Adrenal gland (tissue), 19 donors: ENCODE measurements at regions of chr3 and their contacts with region 1.

Region 1: DNA sequence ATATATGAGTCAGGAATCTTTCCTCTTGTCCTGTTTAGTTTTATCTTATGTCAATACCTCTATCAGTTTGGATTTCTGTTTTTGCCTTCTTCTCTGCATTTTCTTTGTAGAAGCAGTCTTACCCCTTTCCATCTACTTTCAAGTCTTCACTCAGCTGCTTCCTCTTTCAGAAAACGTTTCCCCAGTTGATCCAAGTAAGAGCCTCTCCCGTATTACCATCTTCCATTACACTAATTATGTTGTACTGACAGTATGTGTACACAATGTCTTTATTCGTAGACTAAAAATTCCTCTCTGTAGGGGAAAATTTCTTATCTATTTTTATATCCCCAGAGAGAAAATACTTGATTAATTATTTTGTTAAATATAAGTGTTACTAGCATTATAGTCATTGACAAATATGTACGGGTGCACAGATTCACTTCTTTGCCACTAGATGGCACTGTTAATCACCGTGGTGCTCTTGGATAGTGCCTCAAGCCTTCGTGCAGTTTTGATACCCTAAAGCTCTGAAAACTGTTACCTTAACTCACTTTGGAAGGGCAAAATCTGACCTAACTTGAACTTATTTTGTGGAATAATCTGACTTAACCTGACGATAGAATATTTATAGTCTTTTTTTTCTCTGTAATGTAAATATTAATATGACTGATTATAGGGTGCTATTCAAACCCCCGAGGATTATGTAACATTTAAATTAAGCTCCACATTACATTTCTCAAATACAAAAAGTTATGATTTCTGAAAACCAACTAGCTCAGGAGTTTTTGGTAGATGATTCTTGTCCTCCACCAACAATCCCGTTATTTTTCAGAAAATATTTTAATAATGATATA is 74.2 kb upstream of the POU1F1 start:
- DNase-seq: peak in 3 of 7 donors; percentile 9 to 31 (median 21)
- H3K4me3 ChIP-seq: no peak overlapping the region
- H3K27ac ChIP-seq: no peak overlapping the region
- H3K4me1 ChIP-seq: no peaks in the 10 kb centered on the region
- H3K27me3 ChIP-seq: peaks cover 3% of the 10 kb centered on the region
- CTCF ChIP-seq: peak; percentile 50 to 94 (median 69)
- POLR2A ChIP-seq: no peak

Region 2: DNA sequence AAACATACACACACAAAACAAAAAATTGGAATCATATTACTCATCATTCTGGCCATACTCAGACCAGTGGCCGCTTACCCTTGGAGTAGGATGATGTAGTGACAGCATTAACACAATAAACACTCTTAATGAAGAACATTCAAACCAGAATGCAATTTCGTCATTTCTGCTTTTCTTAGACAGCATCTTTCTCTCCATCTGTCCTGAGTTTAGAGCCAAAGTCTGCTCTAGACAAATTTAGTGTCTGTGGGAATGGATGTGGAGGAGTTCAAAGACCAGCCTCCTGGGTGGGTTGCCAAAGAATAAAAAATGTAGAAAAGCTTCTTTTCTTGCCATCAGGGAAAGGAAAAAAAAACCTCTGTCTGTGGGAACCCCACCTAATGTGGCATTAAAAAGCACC is 138.2 kb after region 1 on chr3:
- intact Hi-C with region 1: no loop called
- DNase-seq: no peak
- H3K4me3 ChIP-seq: no peak overlapping the region
- H3K27ac ChIP-seq: no peak overlapping the region
- H3K4me1 ChIP-seq: no peaks in the 10 kb centered on the region
- H3K27me3 ChIP-seq: no peaks in the 10 kb centered on the region
- CTCF ChIP-seq: no peak
- POLR2A ChIP-seq: no peak

Region 3: GRCh38 chr3:87503900-87504508 is 153.4 kb after region 1 on chr3:
- intact Hi-C with region 1: loop called in 1 of 2 experiments (anchors 10 kb)
- DNase-seq: peak in 4 of 7 donors; percentile 8 to 32 (median 22)
- H3K4me3 ChIP-seq: no peak overlapping the region
- H3K27ac ChIP-seq: no peak overlapping the region
- H3K4me1 ChIP-seq: no peaks in the 10 kb centered on the region
- H3K27me3 ChIP-seq: no peaks in the 10 kb centered on the region
- CTCF ChIP-seq: peak; percentile 47 to 58 (median 56)
- POLR2A ChIP-seq: no peak

Region 4: DNA sequence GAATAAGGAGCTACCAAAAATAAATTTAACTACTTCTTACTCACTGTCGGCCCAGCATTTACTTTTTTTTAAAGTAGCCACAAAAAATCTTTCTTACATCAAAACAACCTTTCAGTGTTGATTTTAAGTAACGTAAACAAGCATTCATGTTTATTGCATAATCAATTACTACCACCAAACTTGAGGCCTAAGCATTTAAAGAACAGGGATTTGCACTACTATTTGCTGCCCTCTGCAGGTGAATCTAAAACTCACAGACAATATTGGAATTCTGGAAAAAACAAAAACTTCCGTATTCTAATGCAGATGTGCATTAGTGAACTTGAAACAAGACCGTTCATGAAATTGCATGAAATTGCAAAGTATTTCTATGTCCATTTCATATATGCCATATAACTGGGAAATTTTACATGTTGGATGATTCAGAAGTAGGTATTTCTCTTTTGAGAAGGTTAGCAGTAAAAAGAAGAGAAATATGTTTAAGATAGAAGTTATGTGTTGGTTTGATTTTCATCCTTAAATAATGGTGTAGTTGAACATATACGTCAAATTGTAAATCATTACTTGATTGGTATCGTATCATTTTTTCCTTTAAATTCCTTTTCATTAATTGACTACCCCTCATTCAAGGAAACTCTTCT is 652.7 kb after region 1 on chr3:
- intact Hi-C with region 1: loop called in 1 of 2 experiments (anchors 5 kb)
- DNase-seq: peak in 2 of 7 donors; percentile 21 to 33
- H3K4me3 ChIP-seq: no peak overlapping the region
- H3K27ac ChIP-seq: no peak overlapping the region
- H3K4me1 ChIP-seq: no peaks in the 10 kb centered on the region
- H3K27me3 ChIP-seq: no peaks in the 10 kb centered on the region
- CTCF ChIP-seq: peak; percentile 58 to 76 (median 74)
- POLR2A ChIP-seq: no peak